Endothelial cell of umbilical vein (primary cell): ENCODE measurements at regions of chr5 and their contacts with region 1.

Region 1: DNA sequence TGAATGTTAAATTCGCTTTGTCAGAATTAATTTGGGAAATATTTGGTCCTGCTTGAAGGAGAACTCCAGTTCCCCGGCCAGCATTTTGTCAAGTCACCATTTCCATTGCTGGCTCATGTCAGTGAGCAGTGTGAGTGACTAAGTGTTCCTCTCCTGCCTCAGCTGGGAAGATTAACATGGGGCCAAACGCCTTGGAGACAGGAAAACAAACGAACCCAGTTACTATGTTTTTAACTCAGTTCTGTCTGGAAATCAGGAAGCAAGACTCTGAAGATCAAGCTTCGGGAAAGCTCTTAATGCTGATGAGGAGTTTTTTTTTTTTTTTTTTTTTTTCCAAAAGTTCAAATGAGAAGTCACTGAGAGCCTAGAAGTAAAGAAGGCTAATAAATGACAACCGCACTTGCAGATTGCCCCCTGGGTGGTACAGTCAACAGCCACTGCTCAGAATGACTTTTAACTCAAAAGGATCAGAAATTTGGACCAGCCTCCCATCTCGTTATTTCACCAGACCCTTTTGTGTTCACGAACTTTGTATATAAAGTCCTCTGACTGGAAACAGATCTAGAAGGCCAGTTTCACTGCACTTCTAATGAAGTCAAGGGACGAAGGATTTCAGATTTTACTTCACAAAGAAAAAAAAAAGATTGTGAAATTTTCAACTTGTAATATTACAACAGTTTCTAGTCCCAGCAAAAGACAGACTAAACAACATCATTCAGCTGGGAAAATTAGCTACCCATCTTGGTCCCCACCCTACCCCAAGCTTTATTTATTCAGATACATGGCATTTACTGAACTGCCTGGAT is 121.3 kb downstream of the LHFPL2 start:
- DNase-seq: peak; percentile 99
- H3K4me3 ChIP-seq: peak overlapping the region in 1 of 3 experiments; percentile 1
- H3K27ac ChIP-seq: peak overlapping the region; percentile 99
- H3K4me1 ChIP-seq: peaks cover 84% of the 10 kb centered on the region
- H3K27me3 ChIP-seq: no peaks in the 10 kb centered on the region
- CTCF ChIP-seq: no peak
- POLR2A ChIP-seq: no peak

Region 2: GRCh38 chr5:78320401-78320800 is 206.9 kb before region 1 on chr5:
- CTCF ChIA-PET with region 1: no interaction called
- POLR2A ChIA-PET with region 1: no interaction called
- dilution Hi-C with region 1: no loop called
- intact Hi-C with region 1: no loop called
- DNase-seq: peak; percentile 66
- H3K4me3 ChIP-seq: no peak overlapping the region
- H3K27ac ChIP-seq: no peak overlapping the region
- H3K4me1 ChIP-seq: no peaks in the 10 kb centered on the region
- H3K27me3 ChIP-seq: no peaks in the 10 kb centered on the region
- CTCF ChIP-seq: peak; percentile 27
- POLR2A ChIP-seq: no peak

Region 3: GRCh38 chr5:78430866-78431265 is 96.4 kb before region 1 on chr5:
- CTCF ChIA-PET with region 1: no interaction called
- POLR2A ChIA-PET with region 1: no interaction called
- dilution Hi-C with region 1: no loop called
- intact Hi-C with region 1: no loop called
- DNase-seq: no peak
- H3K4me3 ChIP-seq: no peak overlapping the region
- H3K27ac ChIP-seq: no peak overlapping the region
- H3K4me1 ChIP-seq: no peaks in the 10 kb centered on the region
- H3K27me3 ChIP-seq: no peaks in the 10 kb centered on the region
- CTCF ChIP-seq: no peak
- POLR2A ChIP-seq: no peak

Region 4: GRCh38 chr5:78467752-78468357 is 59.4 kb before region 1 on chr5:
- CTCF ChIA-PET with region 1: interaction called, 47 read pairs
- POLR2A ChIA-PET with region 1: no interaction called
- dilution Hi-C with region 1: no loop called
- intact Hi-C with region 1: loop called (anchors 2 kb)
- DNase-seq: peak; percentile 67
- H3K4me3 ChIP-seq: no peak overlapping the region
- H3K27ac ChIP-seq: no peak overlapping the region
- H3K4me1 ChIP-seq: peaks cover 2% of the 10 kb centered on the region
- H3K27me3 ChIP-seq: no peaks in the 10 kb centered on the region
- CTCF ChIP-seq: peak; percentile 50 to 59
- POLR2A ChIP-seq: no peak

Region 5: DNA sequence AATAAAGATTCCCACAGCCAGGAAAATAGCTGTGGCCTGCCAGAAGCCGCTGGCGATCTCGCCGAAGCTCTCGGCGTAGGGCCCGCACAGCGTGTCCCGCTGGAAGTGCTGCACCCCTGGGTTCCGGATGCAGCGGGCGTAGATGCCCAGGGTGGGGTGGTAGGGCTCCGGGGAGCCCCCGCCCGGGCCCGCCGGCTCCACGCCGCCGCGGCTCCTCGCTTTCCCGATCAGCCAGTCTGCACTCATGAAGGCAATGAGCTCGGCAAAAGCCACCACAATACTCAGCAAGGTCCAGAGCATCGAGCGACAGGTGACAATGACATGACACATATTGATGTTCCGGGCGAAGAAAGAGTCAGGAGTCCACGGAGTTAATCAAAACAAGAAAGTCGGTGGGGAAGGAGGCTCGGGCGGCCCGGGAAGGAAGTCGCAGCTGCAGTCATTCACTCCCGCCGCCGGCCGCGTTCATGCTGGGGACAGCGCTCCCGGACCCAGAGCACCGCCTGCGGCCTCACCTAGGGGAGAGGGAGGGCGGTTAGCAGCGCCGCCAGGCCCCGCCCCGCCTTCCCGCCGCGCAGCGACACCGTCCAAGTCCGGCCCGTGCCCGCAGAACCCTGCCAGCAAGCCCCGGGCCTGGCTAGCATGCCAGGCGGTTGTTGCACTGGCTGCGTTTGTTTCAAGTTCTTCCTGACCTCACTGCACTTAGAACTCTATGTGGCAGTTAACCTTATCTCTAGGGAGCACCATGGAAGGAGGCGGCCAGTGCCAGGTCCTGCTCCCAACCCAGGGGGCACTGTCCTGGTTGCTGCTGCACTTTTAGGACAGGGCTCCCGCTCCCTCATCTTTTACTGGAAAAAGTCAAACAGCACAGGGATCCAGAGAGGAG is 17.1 kb before region 1 on chr5:
- CTCF ChIA-PET with region 1: interaction called, 11 read pairs
- POLR2A ChIA-PET with region 1: interaction called, 7 read pairs
- dilution Hi-C with region 1: no loop called
- intact Hi-C with region 1: loop called (anchors 1 kb)
- DNase-seq: peak; percentile 60
- H3K4me3 ChIP-seq: peak overlapping the region in 2 of 3 experiments; percentile 2 to 7
- H3K27ac ChIP-seq: no peak overlapping the region
- H3K4me1 ChIP-seq: peaks cover 14% of the 10 kb centered on the region
- H3K27me3 ChIP-seq: no peaks in the 10 kb centered on the region
- CTCF ChIP-seq: peak in 1 of 2 donors; percentile 13
- POLR2A ChIP-seq: no peak

Region 6: GRCh38 chr5:78594610-78595457 is 67.6 kb after region 1 on chr5:
- CTCF ChIA-PET with region 1: interaction called, 5 read pairs
- POLR2A ChIA-PET with region 1: no interaction called
- dilution Hi-C with region 1: no loop called
- intact Hi-C with region 1: loop called (anchors 1 kb)
- DNase-seq: peak; percentile 97
- H3K4me3 ChIP-seq: no peak overlapping the region
- H3K27ac ChIP-seq: peak overlapping the region; percentile 100
- H3K4me1 ChIP-seq: peaks cover 66% of the 10 kb centered on the region
- H3K27me3 ChIP-seq: no peaks in the 10 kb centered on the region
- CTCF ChIP-seq: no peak
- POLR2A ChIP-seq: no peak

Region 7: GRCh38 chr5:78771260-78772205 is 244.3 kb after region 1 on chr5:
- CTCF ChIA-PET with region 1: no interaction called
- POLR2A ChIA-PET with region 1: no interaction called
- dilution Hi-C with region 1: no loop called
- intact Hi-C with region 1: loop called (anchors 2 kb)
- DNase-seq: peak; percentile 91
- H3K4me3 ChIP-seq: peak overlapping the region in 1 of 3 experiments; percentile 10
- H3K27ac ChIP-seq: peak overlapping the region; percentile 73
- H3K4me1 ChIP-seq: peaks cover 15% of the 10 kb centered on the region
- H3K27me3 ChIP-seq: no peaks in the 10 kb centered on the region
- CTCF ChIP-seq: no peak
- POLR2A ChIP-seq: no peak